ENCODE measurements at regions of chr12 and their contacts with region 1.

Region 1: GRCh38 chr12:47651368-47652254 is 54.2 kb downstream of the RPAP3 start:
- DNase-seq: no peak
- H3K4me3 ChIP-seq: no peak overlapping the region
- H3K27ac ChIP-seq: no peak overlapping the region
- H3K4me1 ChIP-seq: peaks cover 2 to 6% (median 5%) of the 10 kb centered on the region in 4 experiments; a peak in 6 of 7 replicates
- H3K27me3 ChIP-seq: no peaks in the 10 kb centered on the region
- CTCF ChIP-seq: peak; percentile 27 to 75 (median 69)
- EP300 ChIP-seq: no peak
- POLR2A ChIP-seq: no peak
- RAD21 ChIP-seq: peak; percentile 79 to 82

Region 2: DNA sequence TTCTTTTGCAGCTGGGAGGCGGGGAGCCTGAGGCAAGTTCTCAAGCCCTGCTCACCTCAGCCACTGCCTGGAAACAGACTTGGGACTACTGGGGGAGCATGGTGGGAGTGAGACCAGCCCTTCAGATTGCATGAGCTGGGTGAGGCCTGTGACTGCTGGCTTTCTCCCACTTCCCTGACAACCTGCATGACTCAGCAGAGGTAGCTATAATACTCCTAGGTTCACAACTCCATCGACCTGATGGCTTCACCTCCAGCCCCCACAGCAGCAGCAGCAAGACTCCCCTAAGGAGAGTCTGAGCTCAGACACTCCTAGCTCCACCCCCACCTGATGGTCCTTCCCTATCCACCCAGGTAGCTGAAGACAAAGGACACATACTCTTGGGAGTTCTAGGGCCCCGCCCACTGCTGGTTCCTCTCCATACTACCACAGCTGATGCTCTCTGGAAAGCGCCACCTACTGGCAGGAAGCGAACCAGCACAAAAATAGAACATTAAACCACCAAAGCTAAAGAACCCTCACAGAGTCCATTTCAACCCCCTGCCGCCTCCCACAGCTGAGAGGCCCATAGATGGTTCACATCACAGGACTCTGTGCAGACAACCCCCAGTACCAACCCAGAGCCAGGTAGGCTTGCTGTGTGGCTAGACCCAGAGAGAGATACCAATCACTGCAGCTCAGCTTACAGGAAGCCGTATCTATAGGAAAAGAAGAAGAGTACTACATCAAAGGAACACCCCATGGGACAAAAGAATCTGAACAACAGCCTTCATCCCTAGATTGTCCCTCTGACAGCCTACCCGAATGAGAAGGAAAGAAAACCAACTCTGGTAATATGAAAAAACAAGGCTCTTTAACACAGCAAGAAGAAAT is 14.5 kb before region 1 on chr12:
- CTCF ChIA-PET with region 1: interaction called, 61 read pairs
- POLR2A ChIA-PET with region 1: interaction called, 6 read pairs
- DNase-seq: peak; percentile 53 to 86
- H3K4me3 ChIP-seq: no peak overlapping the region
- H3K27ac ChIP-seq: no peak overlapping the region
- H3K4me1 ChIP-seq: peaks cover 0 to 3% (median 1%) of the 10 kb centered on the region in 4 experiments; a peak in 3 of 7 replicates
- H3K27me3 ChIP-seq: no peaks in the 10 kb centered on the region; a peak in 1 of 7 replicates
- CTCF ChIP-seq: peak; percentile 42 to 75 (median 71)
- EP300 ChIP-seq: no peak
- POLR2A ChIP-seq: no peak
- RAD21 ChIP-seq: peak; percentile 49 to 57

Region 3: DNA sequence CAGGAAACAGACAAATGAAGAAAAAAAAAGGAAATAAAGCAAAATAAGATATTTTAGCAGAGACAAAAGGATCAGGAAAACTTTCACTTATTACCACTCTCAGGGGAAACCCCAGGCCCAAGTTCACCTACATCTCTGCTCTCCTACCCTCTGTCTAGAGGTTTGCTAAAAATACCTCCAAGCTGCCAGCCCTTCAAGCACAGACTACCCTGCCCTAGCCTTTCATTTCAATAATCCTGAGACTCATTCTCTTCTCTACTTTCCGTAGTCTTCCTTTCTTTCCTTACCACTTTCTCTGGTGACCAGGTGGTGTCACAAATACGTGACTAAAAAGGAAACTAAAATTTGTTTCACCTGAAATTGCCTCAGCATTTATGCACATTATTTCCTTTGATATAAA is 20.5 kb after region 1 on chr12:
- CTCF ChIA-PET with region 1: interaction called, 14 read pairs
- POLR2A ChIA-PET with region 1: no interaction called
- DNase-seq: no peak
- H3K4me3 ChIP-seq: no peak overlapping the region
- H3K27ac ChIP-seq: no peak overlapping the region
- H3K4me1 ChIP-seq: no peaks in the 10 kb centered on the region
- H3K27me3 ChIP-seq: no peaks in the 10 kb centered on the region
- CTCF ChIP-seq: no peak
- EP300 ChIP-seq: no peak
- POLR2A ChIP-seq: no peak
- RAD21 ChIP-seq: no peak

Region 4: DNA sequence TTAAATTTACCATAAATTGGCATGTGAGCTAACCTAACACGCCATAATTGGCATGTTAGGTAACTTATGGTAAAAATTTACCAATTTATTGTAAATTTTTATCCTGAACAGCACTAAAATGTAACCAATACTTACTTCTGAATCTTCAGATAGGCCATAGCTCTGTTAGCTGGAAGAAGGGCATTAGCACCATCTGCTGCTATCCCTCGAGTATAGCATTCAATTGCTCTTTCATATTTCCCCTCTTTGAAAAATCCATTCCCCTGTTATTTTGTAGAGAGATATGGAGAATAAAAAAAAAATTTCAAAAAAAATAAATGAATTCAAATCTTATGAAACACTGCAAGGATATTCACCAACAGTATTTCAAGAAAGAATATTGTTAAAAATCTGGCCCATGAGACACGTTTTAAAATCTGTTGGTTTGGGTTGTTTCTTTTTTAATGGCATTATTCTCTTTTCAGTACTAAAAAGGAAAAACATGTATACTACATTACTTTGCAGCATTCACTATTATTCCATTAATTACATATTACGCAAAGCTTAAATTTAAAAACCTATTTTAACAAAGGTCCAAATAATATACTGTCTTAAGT is 35.1 kb after region 1 on chr12:
- CTCF ChIA-PET with region 1: interaction called, 59 read pairs
- POLR2A ChIA-PET with region 1: no interaction called
- DNase-seq: no peak
- H3K4me3 ChIP-seq: no peak overlapping the region
- H3K27ac ChIP-seq: no peak overlapping the region
- H3K4me1 ChIP-seq: no peaks in the 10 kb centered on the region
- H3K27me3 ChIP-seq: no peaks in the 10 kb centered on the region
- CTCF ChIP-seq: peak in 2 of 3 experiments; percentile 49 to 54; a peak in 3 of 4 replicates
- EP300 ChIP-seq: no peak
- POLR2A ChIP-seq: no peak
- RAD21 ChIP-seq: peak; percentile 77 to 83